MCF 10A (cell line): ENCODE measurements at regions of chr3 and their contacts with region 1.

Region 1: DNA sequence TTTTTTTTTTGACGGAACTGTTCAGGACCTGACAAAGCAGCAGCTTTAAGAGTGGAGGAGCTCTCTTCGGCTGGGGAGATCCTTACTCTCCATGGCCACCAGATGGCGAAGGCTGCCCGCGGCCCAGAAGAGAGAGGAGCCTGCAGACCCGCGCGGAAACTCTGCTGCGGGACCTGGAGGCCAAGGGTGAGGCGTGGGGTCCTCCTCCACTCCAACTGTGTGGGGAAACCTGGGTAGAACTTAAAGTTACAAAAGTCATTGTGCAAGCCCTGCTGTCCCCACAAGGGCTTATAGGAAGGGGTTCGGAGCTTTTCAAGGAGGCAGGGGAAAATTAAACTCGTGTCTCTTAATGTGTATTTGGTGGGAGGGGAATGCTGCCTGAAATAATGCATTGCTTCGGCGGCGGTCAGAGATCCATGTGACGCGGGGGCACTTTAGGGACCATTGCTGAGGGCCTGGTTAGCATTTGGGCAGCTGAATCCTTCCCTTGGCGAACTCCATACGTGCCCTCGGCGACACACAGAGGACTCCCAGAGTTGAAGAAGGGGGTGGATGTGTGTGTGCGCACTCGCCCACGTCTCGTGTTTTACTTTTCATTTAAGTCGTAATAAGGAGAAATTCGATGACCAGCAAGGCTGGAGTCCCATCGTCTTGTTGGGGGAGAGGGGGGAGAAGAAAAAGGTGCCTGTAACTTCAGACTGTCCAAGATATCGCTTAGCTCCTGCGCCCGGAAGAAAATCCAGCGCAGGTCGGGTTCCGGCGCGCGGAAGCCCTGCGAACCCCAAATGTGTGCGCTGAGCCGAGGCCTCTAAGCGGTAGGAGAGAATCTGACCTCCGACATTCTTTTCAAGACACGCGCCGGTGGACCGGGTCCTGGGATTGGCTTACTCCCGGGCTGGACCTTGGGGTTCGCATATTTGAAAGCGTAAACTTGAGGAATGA is 9.7 kb downstream of the EOMES start:
- DNase-seq: peak; percentile 83
- H3K4me3 Mint-ChIP-seq: peak overlapping the region; percentile 74
- H3K27ac Mint-ChIP-seq: peak overlapping the region; percentile 17
- H3K4me1 Mint-ChIP-seq: peaks cover 17% of the 10 kb centered on the region
- H3K27me3 Mint-ChIP-seq: no peaks in the 10 kb centered on the region
- CTCF ChIP-seq: peak; percentile 72

Region 2: GRCh38 chr3:27312044-27312668 is 400.3 kb before region 1 on chr3:
- CTCF ChIA-PET with region 1: interaction called, 9 read pairs
- POLR2A ChIA-PET with region 1: interaction called, 3 read pairs
- intact Hi-C with region 1: loop called (anchors 5 kb)
- DNase-seq: peak; percentile 82
- H3K4me3 Mint-ChIP-seq: no peak overlapping the region
- H3K27ac Mint-ChIP-seq: peak overlapping the region; percentile 37
- H3K4me1 Mint-ChIP-seq: peaks cover 13% of the 10 kb centered on the region
- H3K27me3 Mint-ChIP-seq: no peaks in the 10 kb centered on the region
- CTCF ChIP-seq: peak; percentile 62

Region 3: DNA sequence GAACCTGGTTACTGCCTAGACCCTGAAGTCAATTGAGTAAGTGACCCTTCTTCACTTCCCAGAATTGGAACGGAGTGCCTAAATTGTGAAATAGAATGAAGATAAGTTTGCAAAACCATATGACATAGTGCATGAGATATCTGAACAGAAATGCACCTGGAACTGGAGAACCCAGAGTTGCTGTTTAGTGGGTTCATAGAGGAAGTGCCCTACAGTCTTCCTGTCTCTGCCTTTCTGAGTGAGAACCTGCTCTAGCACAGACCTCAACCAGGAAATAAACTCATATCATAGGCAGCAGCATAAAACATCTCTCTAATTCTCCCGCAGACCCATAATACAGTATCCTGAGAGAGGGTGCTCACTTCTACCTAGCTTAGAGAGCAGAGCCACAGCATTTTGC is 73.1 kb before region 1 on chr3:
- CTCF ChIA-PET with region 1: no interaction called
- POLR2A ChIA-PET with region 1: no interaction called
- intact Hi-C with region 1: no loop called
- DNase-seq: no peak
- H3K4me3 Mint-ChIP-seq: no peak overlapping the region
- H3K27ac Mint-ChIP-seq: no peak overlapping the region
- H3K4me1 Mint-ChIP-seq: no peaks in the 10 kb centered on the region
- H3K27me3 Mint-ChIP-seq: no peaks in the 10 kb centered on the region
- CTCF ChIP-seq: no peak

Region 4: DNA sequence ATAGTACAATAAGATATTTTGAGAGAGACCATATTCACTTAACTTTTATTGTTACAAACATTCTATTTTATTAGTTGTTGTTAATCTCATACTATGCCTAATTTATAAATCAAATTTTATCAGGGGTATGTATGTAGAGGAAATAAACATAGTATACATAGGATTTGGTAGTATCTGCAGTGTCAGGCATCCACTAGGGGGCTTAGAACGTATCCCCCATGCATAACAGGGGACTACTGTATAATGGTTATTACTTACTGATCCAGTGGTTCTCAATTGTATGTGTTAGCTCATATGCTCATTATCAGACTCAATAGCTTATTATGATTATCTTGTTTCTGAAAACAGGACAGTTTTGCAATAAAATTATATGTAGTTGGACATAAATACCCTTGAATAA is 556.6 kb after region 1 on chr3:
- CTCF ChIA-PET with region 1: interaction called, 13 read pairs
- POLR2A ChIA-PET with region 1: no interaction called
- intact Hi-C with region 1: no loop called
- DNase-seq: no peak
- H3K4me3 Mint-ChIP-seq: no peak overlapping the region
- H3K27ac Mint-ChIP-seq: no peak overlapping the region
- H3K4me1 Mint-ChIP-seq: peaks cover 6% of the 10 kb centered on the region
- H3K27me3 Mint-ChIP-seq: no peaks in the 10 kb centered on the region
- CTCF ChIP-seq: no peak

Region 5: GRCh38 chr3:28286595-28286994 is 574.2 kb after region 1 on chr3:
- CTCF ChIA-PET with region 1: interaction called, 67 read pairs
- POLR2A ChIA-PET with region 1: interaction called, 6 read pairs
- intact Hi-C with region 1: loop called (anchors 1 kb)
- DNase-seq: peak; percentile 52
- H3K4me3 Mint-ChIP-seq: no peak overlapping the region
- H3K27ac Mint-ChIP-seq: no peak overlapping the region
- H3K4me1 Mint-ChIP-seq: peaks cover 13% of the 10 kb centered on the region
- H3K27me3 Mint-ChIP-seq: no peaks in the 10 kb centered on the region
- CTCF ChIP-seq: peak; percentile 39

Region 6: GRCh38 chr3:28317438-28318022 is 605.1 kb after region 1 on chr3:
- CTCF ChIA-PET with region 1: interaction called, 27 read pairs
- POLR2A ChIA-PET with region 1: interaction called, 3 read pairs
- intact Hi-C with region 1: no loop called
- DNase-seq: peak; percentile 75
- H3K4me3 Mint-ChIP-seq: no peak overlapping the region
- H3K27ac Mint-ChIP-seq: no peak overlapping the region
- H3K4me1 Mint-ChIP-seq: peaks cover 10% of the 10 kb centered on the region
- H3K27me3 Mint-ChIP-seq: no peaks in the 10 kb centered on the region
- CTCF ChIP-seq: peak; percentile 34

Region 7: DNA sequence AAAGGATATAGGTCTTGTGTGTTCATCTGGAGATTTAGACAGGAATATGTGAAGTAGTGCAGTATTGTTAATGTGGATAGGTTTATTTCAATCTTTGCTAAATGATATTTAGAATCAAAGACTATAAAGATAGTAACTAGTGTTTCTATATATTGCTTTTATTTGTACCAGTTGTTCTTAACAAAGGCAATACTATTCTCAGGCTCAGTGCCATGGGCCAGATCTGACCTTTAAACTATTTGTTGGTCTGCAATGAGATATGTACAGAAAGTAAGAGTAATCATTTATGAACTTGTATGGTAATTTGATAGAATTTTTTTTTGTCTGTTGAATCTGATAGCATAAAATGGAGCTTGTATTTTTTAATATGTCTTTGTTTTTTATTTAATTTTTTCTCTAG is 782.9 kb after region 1 on chr3:
- CTCF ChIA-PET with region 1: no interaction called
- POLR2A ChIA-PET with region 1: no interaction called
- intact Hi-C with region 1: no loop called
- DNase-seq: no peak
- H3K4me3 Mint-ChIP-seq: no peak overlapping the region
- H3K27ac Mint-ChIP-seq: no peak overlapping the region
- H3K4me1 Mint-ChIP-seq: no peaks in the 10 kb centered on the region
- H3K27me3 Mint-ChIP-seq: no peaks in the 10 kb centered on the region
- CTCF ChIP-seq: no peak